ENCODE measurements at regions of chr21 and their contacts with region 1.

Region 1: GRCh38 chr21:16821588-16821987 is 691.3 kb upstream of the CXADR start:
- DNase-seq: no peak
- H3K4me3 ChIP-seq: no peak overlapping the region
- CTCF ChIP-seq: no peak
- POLR2A ChIP-seq: no peak

Region 2: DNA sequence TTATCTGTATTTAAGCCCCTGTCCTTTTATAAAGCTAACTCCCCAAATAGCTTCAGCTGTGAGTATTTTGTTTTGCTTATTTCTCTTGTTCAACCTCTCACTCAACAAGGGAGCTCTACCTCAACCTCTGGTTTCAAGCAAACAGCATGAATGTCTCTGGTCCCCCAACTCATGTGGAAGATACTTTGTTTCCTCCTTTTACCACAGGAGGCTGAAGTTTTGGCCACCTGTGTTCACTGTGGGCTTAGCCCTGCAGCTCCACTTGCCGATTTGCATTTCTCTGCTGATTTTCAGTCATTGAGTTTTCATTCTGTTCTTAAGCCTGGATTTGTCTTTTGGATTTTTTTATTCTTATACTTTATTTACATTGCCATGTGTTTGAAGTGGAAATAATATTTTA is 478.7 kb before region 1 on chr21:
- intact Hi-C with region 1: loop called (anchors 2 kb)
- DNase-seq: no peak
- H3K4me3 ChIP-seq: no peak overlapping the region
- CTCF ChIP-seq: no peak
- POLR2A ChIP-seq: no peak